Posterior cingulate gyrus (tissue), 11 donors: ENCODE measurements at regions of chr1 and their contacts with region 1.

Region 1: GRCh38 chr1:88998716-88999115 is 6.3 kb upstream of the KYAT3 start:
- DNase-seq: peak in 1 of 10 donors; percentile 76

Region 2: GRCh38 chr1:88922214-88922613 is 76.5 kb before region 1 on chr1:
- intact Hi-C with region 1: no loop called
- DNase-seq: no peak

Region 3: DNA sequence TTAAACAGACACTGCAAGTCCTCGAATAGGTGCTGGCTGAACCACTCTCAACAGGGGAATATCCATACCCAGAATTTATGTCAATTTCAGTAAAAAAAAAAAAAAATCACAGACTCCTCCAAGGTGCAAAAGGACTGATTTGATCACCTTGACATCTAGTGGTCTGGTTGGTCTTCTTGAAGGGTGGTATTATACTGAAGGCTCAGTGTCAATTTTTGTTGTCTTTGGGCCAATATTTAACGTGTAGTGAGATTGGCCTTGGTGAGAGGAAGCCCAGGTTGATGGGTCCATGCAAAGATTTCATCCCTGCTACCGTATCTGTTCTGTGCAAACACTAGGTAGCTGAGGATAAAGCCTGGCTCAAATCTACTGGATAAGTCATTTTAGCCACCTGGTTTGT is 278.0 kb after region 1 on chr1:
- intact Hi-C with region 1: loop called (anchors 2 kb)
- DNase-seq: no peak

Region 4: DNA sequence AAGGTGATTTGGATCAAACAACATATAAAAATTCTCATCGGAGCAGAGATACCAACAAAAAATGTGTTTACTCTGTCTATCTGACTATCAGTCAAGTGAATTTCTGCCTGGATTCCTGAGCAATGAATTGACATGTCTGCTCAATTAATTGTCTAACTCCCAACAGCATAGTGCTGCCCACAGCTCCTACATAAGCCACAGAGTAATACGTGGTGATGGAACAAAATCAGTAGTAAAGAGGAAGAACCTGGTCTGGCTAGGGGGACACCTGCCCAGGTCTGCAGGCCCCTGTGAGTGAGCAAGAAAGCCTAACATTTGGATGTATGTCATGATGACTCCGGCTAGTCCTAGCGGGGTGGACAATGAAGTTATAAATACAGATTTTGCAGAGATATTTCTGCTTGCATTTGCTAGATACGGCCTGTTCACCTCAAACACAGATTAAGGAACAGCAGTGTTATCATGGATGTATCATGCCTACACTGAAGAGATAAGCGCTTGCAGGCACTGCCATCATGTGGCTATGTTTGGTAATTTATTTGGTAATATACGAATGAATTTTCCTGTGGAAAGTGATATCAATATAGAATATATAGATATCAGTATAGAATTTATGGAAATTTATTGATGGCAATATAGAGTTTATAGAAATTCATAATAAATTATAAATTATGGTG is 456.3 kb after region 1 on chr1:
- intact Hi-C with region 1: loop called (anchors 2 kb)
- DNase-seq: peak in 6 of 10 donors; percentile 24 to 59 (median 40)